Pancreas (tissue), 10 donors: ENCODE measurements at regions of chr3 and their contacts with region 1.

Region 1: DNA sequence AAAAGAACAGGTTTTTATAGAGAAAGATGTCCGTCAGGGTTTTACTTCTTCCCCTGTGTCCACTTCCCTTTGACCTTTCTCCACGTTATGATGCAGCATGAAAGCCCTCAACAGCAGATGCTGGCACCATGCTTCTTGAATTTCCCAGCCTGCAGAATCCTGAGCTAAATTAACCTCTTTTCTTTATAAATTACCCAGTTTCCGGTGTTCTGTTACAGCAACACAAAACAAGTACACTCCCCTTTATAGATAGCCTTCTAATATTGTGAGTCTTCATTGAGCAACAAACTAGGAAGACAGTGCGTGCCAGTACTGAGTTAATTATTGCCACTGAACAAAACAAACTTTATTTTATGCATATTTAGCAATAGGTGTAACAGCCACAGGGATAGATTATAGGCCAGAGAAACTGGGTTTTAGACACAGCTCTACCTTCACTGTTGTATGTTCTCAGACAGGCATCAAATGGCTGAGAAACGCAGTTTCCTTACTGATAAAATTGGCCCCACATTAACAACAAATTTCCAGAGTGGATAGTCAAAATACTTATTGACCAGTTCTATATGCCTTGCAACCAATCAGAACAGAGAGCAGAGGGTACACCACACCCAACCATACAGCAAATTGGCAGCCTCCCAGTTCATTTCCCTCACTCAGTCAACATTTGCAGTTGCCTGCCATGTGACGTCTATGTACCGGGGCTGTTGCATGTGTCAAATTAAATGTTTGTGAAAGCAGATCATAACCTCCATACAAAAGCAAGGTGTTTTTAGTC is 14.4 kb upstream of the TBL1XR1 start:
- DNase-seq: peak in 4 of 6 donors; percentile 65 to 81 (median 68)
- ATAC-seq: peak; percentile 92 to 95 (median 94)
- H3K4me3 ChIP-seq: no peak overlapping the region
- H3K27ac ChIP-seq: peak overlapping the region in 2 of 4 donors; percentile 5 to 53
- H3K4me1 ChIP-seq: peaks cover 3 to 10% (median 5%) of the 10 kb centered on the region in 3 donors
- H3K27me3 ChIP-seq: no peaks in the 10 kb centered on the region
- CTCF ChIP-seq: no peak

Region 2: DNA sequence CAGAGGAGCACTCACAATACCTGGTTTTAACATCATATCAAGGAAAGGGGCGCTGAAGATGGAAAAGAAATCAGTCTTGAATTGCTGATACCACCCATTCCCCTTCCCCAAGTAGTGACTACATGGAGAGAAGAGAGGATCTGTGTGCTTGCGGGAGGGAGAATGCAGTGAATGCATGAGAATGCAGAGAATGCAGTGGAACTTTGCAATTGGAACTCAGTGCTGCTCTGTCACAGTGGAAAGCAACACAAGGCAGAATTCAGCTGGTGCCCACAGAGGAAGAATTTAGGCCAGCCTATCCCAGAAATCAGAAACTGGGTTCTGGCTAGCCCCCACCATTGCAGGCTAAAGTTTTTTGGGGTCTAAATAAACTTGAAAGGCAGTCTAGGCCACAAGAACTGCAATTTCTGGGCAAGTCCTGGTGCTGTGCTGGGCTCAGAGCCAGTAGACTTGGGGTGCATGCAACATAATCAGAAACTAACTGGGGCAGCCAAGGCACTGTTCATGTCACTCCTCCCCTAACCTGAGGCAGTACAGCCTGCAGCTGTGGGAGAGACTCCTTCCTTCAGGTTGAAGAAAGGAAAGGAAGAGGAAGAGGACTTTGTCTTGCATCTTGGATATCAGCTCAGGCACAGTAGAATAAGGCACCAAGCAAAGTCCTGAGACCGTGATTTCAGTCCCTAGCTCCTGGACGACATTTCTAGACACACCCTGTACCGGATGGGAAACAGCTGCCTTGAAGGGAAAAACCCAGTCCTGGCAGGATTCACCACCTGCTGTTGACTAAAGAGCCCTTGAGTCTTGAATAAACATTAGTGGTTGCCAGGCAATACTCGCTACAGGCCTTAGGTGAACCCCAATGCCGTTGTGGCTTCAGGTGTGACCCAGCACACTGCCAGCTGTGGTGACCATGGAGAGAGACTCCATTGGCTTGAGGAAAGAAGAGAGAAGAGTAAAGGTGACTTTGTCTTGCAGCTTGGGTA is 343.7 kb before region 1 on chr3:
- intact Hi-C with region 1: no loop called
- DNase-seq: peak in 4 of 6 donors; percentile 36 to 74 (median 47)
- ATAC-seq: peak; percentile 78 to 88 (median 85)
- H3K4me3 ChIP-seq: no peak overlapping the region
- H3K27ac ChIP-seq: no peak overlapping the region
- H3K4me1 ChIP-seq: peaks cover 0 to 5% (median 0%) of the 10 kb centered on the region in 3 donors
- H3K27me3 ChIP-seq: no peaks in the 10 kb centered on the region
- CTCF ChIP-seq: no peak

Region 3: DNA sequence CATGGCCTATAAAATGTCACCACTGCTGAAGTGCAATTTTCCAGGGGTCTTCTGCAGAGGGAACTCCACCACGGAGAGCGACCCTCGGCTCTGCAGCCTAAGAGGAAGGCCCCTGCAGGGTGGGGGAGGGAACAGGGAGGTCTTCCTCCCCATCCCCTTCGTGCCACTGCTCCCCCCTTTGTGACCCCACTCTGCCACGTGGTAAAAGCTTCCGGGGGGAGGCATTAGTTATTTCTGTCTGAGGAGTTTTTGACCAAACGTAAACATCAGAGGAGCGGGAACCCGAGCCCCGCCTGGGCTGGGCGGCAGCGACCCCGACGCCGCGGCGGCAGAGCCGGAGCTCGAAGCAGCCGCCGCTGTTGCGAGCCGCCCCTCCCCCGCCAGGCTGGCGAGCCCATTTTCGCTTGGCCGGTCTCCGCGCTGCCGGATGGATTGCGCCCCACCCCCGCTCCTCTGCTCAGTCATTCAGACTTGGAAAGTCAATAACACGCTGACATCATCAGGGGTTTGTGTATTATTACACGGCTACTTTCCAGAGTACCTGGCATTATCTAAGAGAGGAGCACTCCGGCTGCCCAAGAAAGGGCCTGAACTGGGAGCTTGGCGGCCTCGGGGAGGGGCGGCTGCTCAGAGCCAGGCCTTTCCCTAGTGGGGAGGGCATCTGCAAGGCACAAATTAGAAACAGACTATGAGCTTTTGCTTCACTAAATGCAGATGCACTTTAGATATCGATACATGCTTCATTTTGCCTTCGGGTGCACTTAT is 148.1 kb after region 1 on chr3:
- intact Hi-C with region 1: loop called in 1 of 3 experiments (anchors 10 kb)
- DNase-seq: peak; percentile 94 to 99 (median 96)
- ATAC-seq: peak; percentile 87 to 96 (median 93)
- H3K4me3 ChIP-seq: peak overlapping the region in 3 of 4 donors; percentile 3 to 42 (median 40)
- H3K27ac ChIP-seq: peak overlapping the region; percentile 64 to 93 (median 80)
- H3K4me1 ChIP-seq: peaks cover 15 to 35% (median 32%) of the 10 kb centered on the region in 3 donors
- H3K27me3 ChIP-seq: no peaks in the 10 kb centered on the region
- CTCF ChIP-seq: no peak